Aorta (tissue), 5 donors: ENCODE measurements at regions of chr16 and their contacts with region 1.

Region 1: GRCh38 chr16:71808593-71809459 is at the start of gene AP1G1:
- DNase-seq: peak; percentile 97 to 98
- ATAC-seq: peak; percentile 98
- H3K4me3 ChIP-seq: peak within 1 kb of the TSS; percentile 91 to 96
- H3K27ac ChIP-seq: peak within 1 kb of the TSS; percentile 69 to 95
- H3K4me1 ChIP-seq: no peaks in the 10 kb centered on the region
- H3K27me3 ChIP-seq: no peaks in the 10 kb centered on the region
- total RNA-seq, gene AP1G1: 72.3 to 87.7 TPM

Region 2: DNA sequence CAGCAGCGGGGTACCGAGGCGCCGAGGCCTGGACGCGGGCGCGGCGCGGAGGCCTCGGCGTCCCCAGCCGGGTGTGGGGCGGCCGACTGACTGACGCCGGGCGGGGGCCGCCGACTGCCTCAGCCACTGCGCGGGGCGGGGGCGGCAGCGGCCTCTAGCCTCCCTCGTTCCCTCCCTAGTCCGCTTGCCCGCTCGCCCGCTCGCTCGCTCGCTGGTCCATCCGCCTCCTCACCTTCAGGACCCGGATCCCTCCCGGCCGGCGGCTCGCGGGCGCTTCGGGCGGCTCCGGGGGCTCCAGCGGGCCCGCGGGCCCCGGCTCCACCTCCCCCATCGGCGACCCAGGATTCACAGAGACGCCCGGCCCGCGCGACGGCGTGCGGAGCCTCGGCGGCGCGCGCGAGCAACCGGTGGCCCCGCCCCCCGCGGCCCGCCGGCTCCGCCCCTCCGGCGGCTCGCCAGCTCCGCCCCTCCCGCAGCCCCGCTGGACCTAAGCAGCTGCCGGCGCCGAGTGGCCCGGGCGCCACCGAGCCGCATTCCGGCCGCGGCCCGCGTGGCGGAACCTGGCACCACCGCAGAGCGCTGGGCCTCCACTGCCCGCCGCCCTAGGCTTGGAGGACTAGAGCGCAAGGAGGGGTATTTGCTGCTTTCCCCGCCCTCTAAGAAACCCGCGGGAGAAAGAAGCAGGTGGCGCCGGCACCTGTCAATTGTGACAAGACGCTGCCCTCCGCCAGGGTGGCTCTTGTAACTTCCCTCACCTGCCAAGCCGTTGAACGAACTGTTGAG is 85.1 kb before region 1 on chr16:
- intact Hi-C with region 1: loop called in 1 of 2 experiments (anchors 10 kb)
- DNase-seq: peak; percentile 77 to 92
- ATAC-seq: peak; percentile 90
- H3K4me3 ChIP-seq: peak overlapping the region; percentile 80 to 93
- H3K27ac ChIP-seq: peak overlapping the region; percentile 89
- H3K4me1 ChIP-seq: peaks cover 0 to 1% of the 10 kb centered on the region in 2 donors
- H3K27me3 ChIP-seq: no peaks in the 10 kb centered on the region

Region 3: DNA sequence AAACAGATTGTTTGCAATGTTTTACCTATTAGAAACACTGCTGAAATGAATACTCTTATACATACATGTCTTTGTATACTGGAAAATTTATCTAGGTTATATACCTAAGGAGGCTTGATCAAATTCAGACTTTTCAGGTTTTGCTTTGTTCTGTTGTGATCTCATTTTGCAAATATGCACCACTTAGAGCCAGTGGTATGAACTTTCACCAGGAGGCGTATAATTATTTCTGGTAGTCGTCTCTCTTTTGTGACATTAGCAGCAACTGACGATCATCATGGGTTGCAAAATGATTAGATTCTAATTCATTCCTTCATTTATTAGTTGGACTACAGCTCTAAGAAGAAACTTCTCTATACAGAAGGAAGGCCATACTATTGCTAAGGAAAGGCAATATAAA is 27.1 kb before region 1 on chr16:
- intact Hi-C with region 1: no loop called
- DNase-seq: no peak
- ATAC-seq: no peak
- H3K4me3 ChIP-seq: no peak overlapping the region
- H3K27ac ChIP-seq: no peak overlapping the region
- H3K4me1 ChIP-seq: no peaks in the 10 kb centered on the region
- H3K27me3 ChIP-seq: no peaks in the 10 kb centered on the region

Region 4: DNA sequence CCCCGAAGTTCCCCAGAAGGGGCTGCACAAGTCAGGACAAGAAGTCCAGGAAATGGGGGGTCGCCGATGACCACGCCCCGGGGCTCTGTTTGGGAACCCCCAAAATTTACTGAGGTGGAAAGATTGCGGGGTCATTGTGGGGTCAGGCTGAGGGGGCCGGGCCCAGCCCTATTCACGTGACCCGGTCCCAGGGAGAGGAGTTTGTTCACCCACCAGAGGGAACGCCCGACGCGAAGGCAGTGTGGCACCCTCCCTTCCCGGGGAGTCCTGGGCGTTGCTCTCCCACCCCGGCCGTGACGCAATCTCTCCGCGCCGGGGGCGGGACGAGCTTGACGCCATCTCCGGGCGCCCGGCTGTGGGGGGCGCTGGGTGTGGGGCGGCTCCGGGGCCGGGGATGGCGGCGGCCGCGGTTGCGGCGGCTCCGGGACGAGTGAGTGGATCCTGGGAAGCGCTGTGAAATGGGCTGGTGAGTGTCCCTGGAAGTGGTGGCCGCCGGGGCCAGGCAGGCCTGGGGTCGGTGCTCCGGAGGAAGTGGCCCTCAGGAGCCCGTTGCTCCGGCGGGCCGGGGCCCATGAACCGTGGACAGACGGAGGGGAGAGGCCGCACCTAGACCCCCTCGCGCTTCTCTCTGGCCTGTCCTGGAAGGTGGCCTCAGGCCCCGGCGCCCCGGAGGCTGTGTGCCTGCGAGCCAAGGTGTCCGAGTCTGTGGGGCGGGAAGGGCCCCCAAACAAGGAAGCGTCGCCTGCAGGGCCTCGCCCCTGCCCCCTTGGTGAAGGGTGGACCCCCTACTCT is 37.0 kb after region 1 on chr16 and contains the start of gene ATXN1L:
- intact Hi-C with region 1: loop called (anchors 5 kb)
- DNase-seq: peak; percentile 95 to 97
- ATAC-seq: peak; percentile 98
- H3K4me3 ChIP-seq: peak within 1 kb of the TSS; percentile 67 to 96
- H3K27ac ChIP-seq: peak within 1 kb of the TSS; percentile 9 to 49
- H3K4me1 ChIP-seq: no peaks in the 10 kb centered on the region
- H3K27me3 ChIP-seq: no peaks in the 10 kb centered on the region
- total RNA-seq, gene ATXN1L: 30.4 to 31.2 TPM

Region 5: DNA sequence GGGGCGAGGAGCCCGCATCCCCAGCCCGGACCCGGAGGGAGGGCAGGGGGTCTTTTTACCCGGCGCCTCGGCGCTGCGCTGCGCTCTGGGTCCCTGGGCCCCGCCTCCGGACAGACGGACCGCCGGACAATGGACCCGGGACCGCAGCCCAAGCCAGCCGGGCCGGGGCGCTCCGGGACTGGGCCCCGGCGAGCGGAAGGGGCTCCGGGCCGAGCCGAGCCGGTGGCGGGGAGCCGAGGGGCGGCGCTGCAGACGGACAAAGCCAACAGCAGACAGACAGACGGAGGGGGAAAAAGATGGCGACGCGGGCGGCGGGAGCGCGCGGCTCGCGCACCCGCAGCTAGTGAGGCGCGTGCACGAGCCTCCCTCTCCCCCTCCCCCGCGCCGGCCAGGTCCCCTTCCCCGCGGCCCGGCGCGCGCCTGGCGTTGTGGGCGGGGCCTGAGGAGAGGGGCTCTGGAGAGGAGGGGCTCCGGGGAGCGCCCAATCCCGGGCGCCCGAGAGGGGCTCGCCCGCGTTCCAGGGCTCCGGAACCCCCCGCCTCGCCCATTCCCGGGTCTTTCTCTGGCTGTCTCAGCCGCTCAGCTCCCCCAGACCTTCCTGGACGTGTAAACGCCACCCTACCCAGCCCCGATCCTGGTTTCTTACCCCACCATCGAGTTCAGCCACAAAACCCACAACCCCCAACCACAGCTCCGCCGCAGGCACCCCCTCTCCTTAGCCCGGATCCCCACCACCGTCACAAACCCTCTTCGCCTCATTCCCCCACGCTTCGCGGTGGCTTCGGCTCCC is 75.2 kb after region 1 on chr16 and contains the start of gene ZNF821:
- intact Hi-C with region 1: loop called in 1 of 2 experiments (anchors 5 kb)
- DNase-seq: peak; percentile 86 to 92
- ATAC-seq: peak; percentile 93
- H3K4me3 ChIP-seq: peak within 1 kb of the TSS; percentile 58 to 86
- H3K27ac ChIP-seq: peak within 1 kb of the TSS; percentile 83
- H3K4me1 ChIP-seq: no peaks in the 10 kb centered on the region
- H3K27me3 ChIP-seq: no peaks in the 10 kb centered on the region
- total RNA-seq, gene ZNF821: 7.9 to 9.9 TPM

Region 6: DNA sequence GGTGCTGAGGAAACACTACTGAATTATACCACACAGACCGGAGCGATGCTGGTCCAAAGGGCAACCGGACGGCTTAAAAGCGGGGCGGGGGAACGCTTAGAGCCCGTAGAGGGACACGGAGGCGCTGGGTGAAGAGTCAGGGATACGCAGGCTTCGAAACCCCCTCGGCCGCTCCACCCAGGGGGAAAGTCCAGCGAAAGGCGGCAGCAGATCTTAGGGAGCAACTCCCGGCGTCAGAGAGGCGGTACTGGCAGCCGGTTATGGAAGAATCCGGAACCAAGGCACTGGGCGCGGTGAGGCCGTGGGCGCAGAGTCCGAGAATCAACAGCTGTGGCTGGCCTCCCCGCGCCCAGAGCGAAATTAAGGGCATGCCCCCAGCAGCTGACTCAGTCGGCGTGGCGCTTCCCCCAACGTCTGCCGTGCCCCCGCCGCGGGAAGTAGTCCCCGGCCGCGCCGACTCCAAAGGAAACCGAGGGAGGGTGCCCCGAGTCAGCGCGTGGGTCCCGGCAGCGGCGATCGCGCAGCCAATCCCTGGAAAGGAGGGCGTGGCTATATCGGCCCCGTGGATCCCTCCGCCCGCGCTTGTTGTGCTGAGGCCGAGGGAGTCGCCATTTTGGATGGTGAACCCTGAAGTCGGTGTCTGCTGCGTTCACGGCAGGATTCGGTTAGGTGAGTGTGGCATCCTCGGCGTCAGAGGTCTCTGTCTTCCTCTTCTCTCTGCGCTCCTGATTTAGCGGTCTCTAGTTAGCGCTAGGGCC is 86.3 kb after region 1 on chr16 and contains the start of gene IST1:
- intact Hi-C with region 1: loop called (anchors 2 to 5 kb)
- DNase-seq: peak; percentile 99
- ATAC-seq: peak; percentile 99
- H3K4me3 ChIP-seq: peak within 1 kb of the TSS; percentile 87 to 93
- H3K27ac ChIP-seq: peak within 1 kb of the TSS; percentile 72 to 99
- H3K4me1 ChIP-seq: peaks cover 0 to 2% of the 10 kb centered on the region in 2 donors
- H3K27me3 ChIP-seq: no peaks in the 10 kb centered on the region
- total RNA-seq, gene IST1: 152 to 202 TPM

Region 7: GRCh38 chr16:71961066-71962039 is 152.5 kb after region 1 on chr16:
- intact Hi-C with region 1: no loop called
- DNase-seq: peak; percentile 87 to 92
- ATAC-seq: peak; percentile 91
- H3K4me3 ChIP-seq: no peak overlapping the region
- H3K27ac ChIP-seq: no peak overlapping the region
- H3K4me1 ChIP-seq: no peaks in the 10 kb centered on the region
- H3K27me3 ChIP-seq: no peaks in the 10 kb centered on the region